T-cell (primary cell): ENCODE measurements at regions of chr1 and their contacts with region 1.

Region 1: DNA sequence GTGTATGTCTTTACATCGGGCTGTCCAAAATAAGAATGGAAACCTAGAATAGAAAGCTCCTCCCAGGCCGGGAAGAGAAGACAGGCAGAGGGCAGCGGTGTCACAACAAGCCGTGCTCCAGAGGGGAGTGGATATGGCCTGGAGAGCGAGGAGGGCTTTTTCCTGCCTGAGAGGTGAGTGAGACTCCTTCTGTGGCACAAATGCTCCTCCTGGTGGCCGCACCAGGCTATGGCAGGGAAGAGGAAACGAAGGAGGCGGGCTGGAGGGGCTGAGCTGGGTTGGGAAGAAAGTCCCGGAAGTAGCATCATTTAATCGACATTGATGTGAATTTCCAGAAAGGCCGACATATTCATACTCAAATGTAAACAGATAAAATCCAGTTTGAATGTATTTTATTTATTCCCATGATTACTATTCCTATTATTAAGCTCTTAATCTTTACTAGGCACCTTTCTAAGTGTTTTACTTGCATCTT is 54.7 kb downstream of the MEF2D start:
- DNase-seq: peak; percentile 37 to 87 (median 67)
- ATAC-seq: peak; percentile 80 to 86 (median 84)
- H3K4me3 ChIP-seq: no peak overlapping the region
- H3K4me3 Mint-ChIP-seq: peak overlapping the region in 1 of 3 donors; percentile 4
- H3K27ac ChIP-seq: no peak overlapping the region
- H3K27ac Mint-ChIP-seq: no peak overlapping the region
- H3K4me1 ChIP-seq: peaks cover 2 to 5% of the 10 kb centered on the region in 2 experiments
- H3K4me1 Mint-ChIP-seq: peaks cover 4 to 9% (median 8%) of the 10 kb centered on the region in 3 donors
- H3K27me3 ChIP-seq: peaks cover 24 to 36% of the 10 kb centered on the region in 2 experiments
- H3K27me3 Mint-ChIP-seq: peaks cover 32 to 60% of the 10 kb centered on the region in 2 donors

Region 2: GRCh38 chr1:156456622-156457465 is 11.0 kb after region 1 on chr1:
- CTCF ChIA-PET with region 1: interaction called, 4 to 13 read pairs
- POLR2A ChIA-PET with region 1: no interaction called
- DNase-seq: peak; percentile 85 to 99 (median 96)
- ATAC-seq: peak; percentile 83 to 88 (median 85)
- H3K4me3 ChIP-seq: peak overlapping the region; percentile 74 to 77
- H3K4me3 Mint-ChIP-seq: peak overlapping the region; percentile 87 to 89 (median 88)
- H3K27ac ChIP-seq: peak overlapping the region; percentile 97
- H3K27ac Mint-ChIP-seq: peak overlapping the region; percentile 94 to 98
- H3K4me1 ChIP-seq: peaks cover 4 to 19% of the 10 kb centered on the region in 2 experiments
- H3K4me1 Mint-ChIP-seq: peaks cover 14 to 22% (median 19%) of the 10 kb centered on the region in 3 donors
- H3K27me3 ChIP-seq: no peaks in the 10 kb centered on the region
- H3K27me3 Mint-ChIP-seq: no peaks in the 10 kb centered on the region

Region 3: DNA sequence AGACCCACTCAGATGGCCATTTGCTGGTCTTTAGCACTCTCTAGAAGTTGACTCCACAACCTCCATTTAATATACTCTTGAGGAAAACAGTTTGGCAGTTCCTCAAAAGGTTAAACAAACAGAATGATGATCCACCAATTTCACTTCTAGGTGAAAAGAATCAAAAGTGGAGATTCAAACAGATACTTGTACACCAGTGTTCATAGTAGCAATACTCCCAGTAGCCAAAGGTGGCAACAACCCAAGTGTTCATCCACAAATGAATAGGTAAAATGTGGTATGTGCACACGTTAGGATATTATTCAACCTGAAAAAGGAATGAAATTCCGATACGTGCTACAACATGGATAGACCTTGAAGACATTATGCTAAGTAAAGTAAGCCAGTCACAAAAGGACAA is 327.8 kb after region 1 on chr1:
- CTCF ChIA-PET with region 1: no interaction called
- POLR2A ChIA-PET with region 1: no interaction called
- DNase-seq: no peak
- ATAC-seq: no peak
- H3K4me3 ChIP-seq: no peak overlapping the region
- H3K4me3 Mint-ChIP-seq: no peak overlapping the region
- H3K27ac ChIP-seq: no peak overlapping the region
- H3K27ac Mint-ChIP-seq: no peak overlapping the region
- H3K4me1 ChIP-seq: peaks cover 26 to 32% of the 10 kb centered on the region in 2 experiments
- H3K4me1 Mint-ChIP-seq: peaks cover 72 to 77% (median 73%) of the 10 kb centered on the region in 3 donors
- H3K27me3 ChIP-seq: no peaks in the 10 kb centered on the region
- H3K27me3 Mint-ChIP-seq: no peaks in the 10 kb centered on the region

Region 4: DNA sequence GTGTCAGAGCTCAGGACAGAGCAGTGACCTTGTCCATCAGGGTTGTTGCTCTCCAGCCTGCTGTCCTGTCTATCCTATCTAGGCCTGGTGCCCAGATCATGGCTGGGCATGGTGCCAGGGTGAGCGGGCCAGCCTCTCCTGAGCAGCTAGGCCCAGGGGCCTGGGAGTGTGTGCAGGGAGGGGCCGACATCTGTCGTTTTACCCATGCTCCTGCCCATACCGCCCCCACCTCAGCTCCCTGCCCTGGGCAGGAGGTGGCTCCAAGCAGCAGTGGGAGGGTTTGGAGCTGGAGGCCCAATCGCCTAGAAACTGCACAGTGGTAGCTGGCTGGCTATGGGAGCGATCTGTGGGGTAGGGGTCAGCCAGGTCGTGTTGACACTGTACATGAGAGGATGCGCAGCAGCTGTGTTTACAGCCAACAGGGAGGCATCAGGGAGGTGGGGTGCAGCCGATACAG is 406.6 kb after region 1 on chr1:
- CTCF ChIA-PET with region 1: no interaction called
- POLR2A ChIA-PET with region 1: no interaction called
- DNase-seq: no peak
- ATAC-seq: no peak
- H3K4me3 ChIP-seq: no peak overlapping the region
- H3K4me3 Mint-ChIP-seq: no peak overlapping the region
- H3K27ac ChIP-seq: no peak overlapping the region
- H3K27ac Mint-ChIP-seq: no peak overlapping the region
- H3K4me1 ChIP-seq: peaks cover 0 to 15% of the 10 kb centered on the region in 2 experiments
- H3K4me1 Mint-ChIP-seq: peaks cover 14 to 18% (median 17%) of the 10 kb centered on the region in 3 donors
- H3K27me3 ChIP-seq: peaks cover 3 to 49% of the 10 kb centered on the region in 2 experiments
- H3K27me3 Mint-ChIP-seq: peaks cover 4 to 14% of the 10 kb centered on the region in 2 donors